ENCODE measurements at regions of chr12 and their contacts with region 1.

Region 1: DNA sequence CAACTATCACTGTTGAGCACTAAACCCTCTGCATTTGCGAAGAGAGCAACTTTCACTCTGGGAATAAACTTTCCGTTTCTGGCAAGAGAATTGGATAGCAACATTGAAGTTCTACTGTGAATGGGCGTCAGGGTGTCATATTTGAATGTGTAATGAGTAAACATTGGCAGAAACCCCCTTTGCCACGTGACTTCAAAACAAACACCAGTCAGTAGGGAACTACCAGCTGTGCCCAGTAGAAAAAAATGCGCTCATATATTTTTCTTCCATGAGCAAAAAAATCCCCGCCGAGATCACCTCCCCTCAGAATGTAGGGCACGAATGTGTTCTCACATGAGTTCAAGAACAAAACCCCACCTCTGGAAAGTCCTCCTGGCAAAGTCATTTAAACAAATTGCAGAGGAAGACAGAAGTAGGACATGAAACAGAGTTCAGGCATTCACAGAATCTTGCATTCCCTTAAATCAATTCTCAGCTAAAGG is 80.6 kb downstream of the BTG1 start:
- DNase-seq: peak; percentile 86
- H3K4me3 Mint-ChIP-seq: peak overlapping the region; percentile 22
- H3K27ac Mint-ChIP-seq: peak overlapping the region; percentile 84
- H3K4me1 Mint-ChIP-seq: peaks cover 65% of the 10 kb centered on the region
- H3K27me3 Mint-ChIP-seq: no peaks in the 10 kb centered on the region

Region 2: DNA sequence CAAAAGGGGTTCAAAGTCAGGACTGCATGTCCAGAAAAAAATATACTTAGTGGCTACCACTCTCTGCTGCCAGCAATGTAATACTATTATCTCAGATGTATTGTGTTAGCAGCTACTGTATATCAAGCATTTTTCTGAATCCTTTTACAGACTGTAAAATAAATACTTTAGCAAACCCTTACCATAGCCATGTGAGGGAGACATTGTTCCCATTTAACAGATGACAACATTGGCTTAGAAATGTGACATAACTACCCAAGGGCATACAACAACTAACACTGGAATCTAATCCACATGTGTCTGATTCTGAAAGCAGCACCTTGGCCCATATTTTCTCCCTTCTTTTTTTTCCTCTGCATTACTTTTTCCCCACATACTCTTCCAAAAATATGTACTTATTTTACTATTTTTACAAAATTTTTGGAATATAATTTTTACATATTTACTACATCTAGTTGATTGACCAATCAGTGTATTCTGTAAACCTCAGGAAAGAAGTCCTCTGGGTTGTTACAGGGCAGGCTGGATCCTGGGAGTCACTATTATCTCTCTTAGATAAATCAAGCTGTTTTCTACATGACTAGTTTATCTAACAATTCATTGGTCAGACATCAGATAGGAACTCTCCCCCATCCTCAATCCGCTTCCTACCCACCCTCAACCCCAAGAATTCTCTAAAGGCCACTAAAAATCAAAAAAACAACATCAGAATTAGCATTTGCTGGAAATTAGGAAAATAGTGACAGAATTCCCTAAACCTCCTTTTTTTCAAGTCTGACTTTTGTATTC is 73.5 kb before region 1 on chr12:
- CTCF ChIA-PET with region 1: no interaction called
- intact Hi-C with region 1: no loop called
- DNase-seq: no peak
- H3K4me3 Mint-ChIP-seq: no peak overlapping the region
- H3K27ac Mint-ChIP-seq: no peak overlapping the region
- H3K4me1 Mint-ChIP-seq: peaks cover 61% of the 10 kb centered on the region
- H3K27me3 Mint-ChIP-seq: no peaks in the 10 kb centered on the region

Region 3: DNA sequence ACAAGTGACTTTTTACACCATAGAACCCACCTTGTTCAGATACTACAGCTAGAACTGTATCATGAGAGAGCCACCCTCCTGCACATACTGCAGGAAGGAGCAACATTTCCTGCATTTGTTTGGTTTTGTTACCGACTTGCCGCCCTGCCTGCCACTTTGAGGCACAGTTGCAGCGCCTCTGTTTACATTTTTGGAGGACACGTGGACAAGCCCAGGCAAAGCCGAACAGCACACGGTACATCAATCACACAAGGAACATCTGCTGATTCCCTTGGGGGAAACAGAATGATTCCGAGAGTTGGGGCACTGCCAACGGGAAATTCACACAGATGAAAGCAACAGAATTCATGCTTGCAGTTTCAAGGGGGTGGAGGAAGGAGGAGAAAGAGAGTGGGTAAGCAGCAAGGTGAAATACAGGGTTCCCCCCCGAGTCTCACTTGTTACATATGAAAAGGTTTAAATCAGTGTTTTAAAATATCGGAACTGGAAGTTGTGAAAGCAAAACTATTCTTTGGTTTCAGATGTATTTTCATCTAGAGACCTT is 30.1 kb before region 1 on chr12:
- CTCF ChIA-PET with region 1: interaction called, 3 read pairs
- intact Hi-C with region 1: loop called (anchors 1 kb)
- DNase-seq: peak; percentile 86
- H3K4me3 Mint-ChIP-seq: peak overlapping the region; percentile 78
- H3K27ac Mint-ChIP-seq: peak overlapping the region; percentile 93
- H3K4me1 Mint-ChIP-seq: peaks cover 83% of the 10 kb centered on the region
- H3K27me3 Mint-ChIP-seq: no peaks in the 10 kb centered on the region

Region 4: GRCh38 chr12:92078167-92079053 is 13.4 kb after region 1 on chr12:
- CTCF ChIA-PET with region 1: interaction called, 4 read pairs
- intact Hi-C with region 1: loop called (anchors 1 kb)
- DNase-seq: peak; percentile 49
- H3K4me3 Mint-ChIP-seq: no peak overlapping the region
- H3K27ac Mint-ChIP-seq: peak overlapping the region; percentile 77
- H3K4me1 Mint-ChIP-seq: peaks cover 78% of the 10 kb centered on the region
- H3K27me3 Mint-ChIP-seq: no peaks in the 10 kb centered on the region

Region 5: GRCh38 chr12:92088805-92089204 is 23.7 kb after region 1 on chr12:
- CTCF ChIA-PET with region 1: no interaction called
- intact Hi-C with region 1: no loop called
- DNase-seq: no peak
- H3K4me3 Mint-ChIP-seq: no peak overlapping the region
- H3K27ac Mint-ChIP-seq: no peak overlapping the region
- H3K4me1 Mint-ChIP-seq: peaks cover 44% of the 10 kb centered on the region
- H3K27me3 Mint-ChIP-seq: no peaks in the 10 kb centered on the region

Region 6: GRCh38 chr12:92111256-92111655 is 46.2 kb after region 1 on chr12:
- CTCF ChIA-PET with region 1: interaction called, 3 read pairs
- intact Hi-C with region 1: loop called (anchors 2 kb)
- DNase-seq: no peak
- H3K4me3 Mint-ChIP-seq: peak overlapping the region; percentile 71
- H3K27ac Mint-ChIP-seq: peak overlapping the region; percentile 91
- H3K4me1 Mint-ChIP-seq: peaks cover 81% of the 10 kb centered on the region
- H3K27me3 Mint-ChIP-seq: no peaks in the 10 kb centered on the region

Region 7: GRCh38 chr12:92170050-92170449 is 105.0 kb after region 1 on chr12:
- CTCF ChIA-PET with region 1: no interaction called
- intact Hi-C with region 1: no loop called
- DNase-seq: no peak
- H3K4me3 Mint-ChIP-seq: no peak overlapping the region
- H3K27ac Mint-ChIP-seq: no peak overlapping the region
- H3K4me1 Mint-ChIP-seq: peaks cover 39% of the 10 kb centered on the region
- H3K27me3 Mint-ChIP-seq: no peaks in the 10 kb centered on the region

Region 8: DNA sequence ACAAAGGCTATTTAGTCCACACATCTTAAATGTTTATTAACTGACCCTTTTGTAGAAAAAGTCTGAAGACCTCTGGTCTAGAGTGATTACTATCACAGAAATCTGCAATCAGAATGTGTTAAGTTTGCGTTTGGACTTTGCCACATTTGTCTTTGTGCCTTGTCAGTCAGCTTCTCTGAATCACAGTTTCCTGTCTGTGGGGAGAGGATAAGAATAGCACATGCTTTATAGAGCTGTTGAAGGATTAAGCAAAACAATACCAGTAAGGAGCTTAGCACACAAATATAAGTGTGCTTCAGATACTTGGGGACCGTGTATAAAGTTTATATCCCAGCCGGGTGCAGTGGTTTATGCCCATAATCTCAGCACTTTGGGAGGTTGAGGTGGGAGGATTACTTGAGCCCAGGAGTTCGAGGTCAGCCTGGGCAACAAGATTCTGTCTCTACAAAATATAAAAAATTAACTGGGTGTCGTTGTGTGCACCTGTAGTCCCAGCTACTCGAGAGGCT is 143.6 kb after region 1 on chr12:
- CTCF ChIA-PET with region 1: interaction called, 3 read pairs
- intact Hi-C with region 1: loop called (anchors 2 kb)
- DNase-seq: peak; percentile 42
- H3K4me3 Mint-ChIP-seq: peak overlapping the region; percentile 66
- H3K27ac Mint-ChIP-seq: peak overlapping the region; percentile 86
- H3K4me1 Mint-ChIP-seq: peaks cover 45% of the 10 kb centered on the region
- H3K27me3 Mint-ChIP-seq: no peaks in the 10 kb centered on the region

Region 9: GRCh38 chr12:92551853-92552397 is 486.9 kb after region 1 on chr12:
- CTCF ChIA-PET with region 1: no interaction called
- intact Hi-C with region 1: loop called (anchors 1 kb)
- DNase-seq: peak; percentile 83
- H3K4me3 Mint-ChIP-seq: no peak overlapping the region
- H3K27ac Mint-ChIP-seq: no peak overlapping the region
- H3K4me1 Mint-ChIP-seq: peaks cover 38% of the 10 kb centered on the region
- H3K27me3 Mint-ChIP-seq: no peaks in the 10 kb centered on the region